ENCODE measurements at regions of chr5 and their contacts with region 1.

Region 1: DNA sequence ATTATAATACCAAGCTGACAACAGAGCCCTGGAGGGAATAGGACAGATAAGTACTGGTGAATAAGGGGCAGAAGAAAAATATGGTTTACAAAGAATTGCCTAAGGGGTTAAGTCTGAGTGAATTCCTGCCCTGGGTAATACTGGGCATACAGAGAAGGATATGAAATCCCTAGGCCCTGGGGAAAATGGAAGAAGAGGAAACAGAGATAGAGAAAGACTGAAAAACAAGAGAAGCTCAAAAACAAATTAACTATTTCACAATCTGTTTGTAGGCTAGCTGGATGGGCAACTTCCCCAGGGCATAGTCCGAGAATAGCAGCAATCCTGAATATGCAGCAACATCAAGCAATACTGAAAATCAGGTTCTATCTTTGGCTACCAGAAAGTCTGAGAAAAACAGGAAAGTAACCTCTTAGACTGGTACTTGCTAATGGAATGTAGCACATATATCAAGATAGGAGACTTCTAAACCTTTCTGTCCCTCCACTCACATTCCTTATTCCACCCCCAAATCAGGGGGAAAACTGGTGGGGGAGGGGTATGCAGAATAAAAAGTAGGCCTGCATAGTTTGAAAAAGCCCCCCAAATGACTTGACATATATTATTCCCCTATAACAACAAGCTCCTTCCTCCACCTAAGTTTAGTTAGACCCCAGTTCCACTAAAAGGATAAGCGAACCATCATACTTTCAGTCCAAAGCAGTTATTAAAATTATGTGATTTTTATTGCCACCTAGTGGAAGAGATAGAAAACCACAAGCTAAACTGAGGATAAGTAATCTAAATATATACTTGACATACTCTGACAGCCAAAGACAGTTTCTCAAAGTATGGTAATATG is 20.6 kb downstream of the SLC38A9 start:
- DNase-seq: no peak
- H3K4me3 Mint-ChIP-seq: no peak overlapping the region
- H3K27ac Mint-ChIP-seq: peak overlapping the region; percentile 69
- H3K4me1 Mint-ChIP-seq: peaks cover 18% of the 10 kb centered on the region
- H3K27me3 Mint-ChIP-seq: no peaks in the 10 kb centered on the region

Region 2: GRCh38 chr5:55172051-55172899 is 519.2 kb before region 1 on chr5:
- intact Hi-C with region 1: loop called (anchors 5 kb)
- DNase-seq: peak; percentile 60
- H3K4me3 Mint-ChIP-seq: peak overlapping the region; percentile 86
- H3K27ac Mint-ChIP-seq: peak overlapping the region; percentile 36
- H3K4me1 Mint-ChIP-seq: peaks cover 34% of the 10 kb centered on the region
- H3K27me3 Mint-ChIP-seq: peaks cover 66% of the 10 kb centered on the region

Region 3: DNA sequence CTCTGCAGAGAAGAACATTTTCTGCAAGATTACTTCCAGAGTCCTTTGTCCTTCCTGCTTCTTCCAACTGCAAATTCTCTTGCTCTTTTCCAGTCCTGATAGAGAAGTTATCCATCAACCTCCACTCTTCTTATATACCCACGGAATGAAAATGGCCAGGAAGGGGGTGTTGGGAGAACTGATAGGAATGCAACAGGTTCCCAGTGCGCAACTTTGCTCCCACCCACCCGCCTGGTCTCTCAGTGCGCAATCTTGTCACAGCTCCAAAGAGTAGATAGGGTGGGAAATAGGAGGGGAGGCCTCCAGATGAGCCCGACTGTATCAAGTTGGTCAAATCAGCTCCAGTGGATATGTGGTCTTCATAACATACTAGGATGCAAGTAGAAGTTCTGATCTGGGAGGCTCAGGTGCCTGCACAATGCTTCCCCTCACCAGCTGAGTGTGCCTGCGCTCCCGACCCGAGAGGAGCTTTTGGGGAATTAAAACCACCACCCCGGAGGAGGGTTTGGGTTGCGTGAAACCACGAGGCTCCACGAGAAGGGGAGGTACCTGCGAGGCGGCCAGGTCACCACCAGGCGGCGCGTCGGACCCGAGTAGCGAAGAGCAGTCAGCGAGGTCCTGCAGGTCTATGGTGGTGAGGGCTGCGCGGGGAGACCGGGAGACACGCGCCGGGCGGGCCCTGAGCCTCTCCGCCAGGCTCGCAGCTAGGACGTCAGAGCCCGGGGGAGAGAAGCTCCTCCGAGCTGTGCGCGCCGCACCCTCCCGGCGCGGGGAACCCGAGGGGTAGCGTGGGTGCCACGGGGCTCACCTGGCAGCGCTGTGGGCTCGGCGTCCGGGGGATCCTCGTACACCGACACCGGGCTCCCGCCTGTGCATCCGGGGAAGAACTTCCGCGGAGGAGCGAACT is 465.2 kb before region 1 on chr5:
- intact Hi-C with region 1: loop called (anchors 5 kb)
- DNase-seq: peak; percentile 50
- H3K4me3 Mint-ChIP-seq: peak overlapping the region; percentile 50
- H3K27ac Mint-ChIP-seq: no peak overlapping the region
- H3K4me1 Mint-ChIP-seq: peaks cover 29% of the 10 kb centered on the region
- H3K27me3 Mint-ChIP-seq: peaks cover 83% of the 10 kb centered on the region

Region 4: DNA sequence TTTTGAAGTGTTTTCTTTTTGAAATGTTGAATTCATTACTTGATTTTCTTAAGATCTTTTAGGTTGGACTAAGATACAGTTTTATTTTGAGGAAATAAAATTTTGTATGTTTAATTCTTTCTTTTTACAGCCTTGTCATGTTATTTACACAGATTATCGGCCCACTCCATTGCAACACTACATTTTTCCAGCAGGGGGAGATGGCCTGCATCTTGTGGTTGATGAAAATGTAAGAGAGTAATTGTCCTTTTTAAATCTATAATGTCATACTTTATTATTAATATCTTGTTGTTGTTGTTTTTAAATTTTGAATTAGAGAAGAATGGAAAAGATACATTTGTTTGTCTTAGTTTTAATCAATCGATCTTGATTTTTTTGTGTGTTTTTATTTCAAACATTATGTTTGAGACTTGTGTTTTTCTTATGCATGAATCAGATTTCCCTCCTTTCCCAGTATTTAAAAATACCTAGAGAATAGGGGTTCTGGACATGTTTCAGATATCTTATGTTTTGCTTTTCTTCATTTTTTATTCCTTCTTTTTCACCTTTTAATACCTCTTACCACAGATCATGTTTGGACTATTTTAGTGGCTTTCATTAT is 347.0 kb before region 1 on chr5:
- intact Hi-C with region 1: loop called (anchors 1 kb)
- DNase-seq: peak; percentile 37
- H3K4me3 Mint-ChIP-seq: no peak overlapping the region
- H3K27ac Mint-ChIP-seq: peak overlapping the region; percentile 58
- H3K4me1 Mint-ChIP-seq: peaks cover 4% of the 10 kb centered on the region
- H3K27me3 Mint-ChIP-seq: no peaks in the 10 kb centered on the region

Region 5: GRCh38 chr5:55407059-55407684 is 284.3 kb before region 1 on chr5:
- intact Hi-C with region 1: loop called (anchors 1 kb)
- DNase-seq: no peak
- H3K4me3 Mint-ChIP-seq: no peak overlapping the region
- H3K27ac Mint-ChIP-seq: no peak overlapping the region
- H3K4me1 Mint-ChIP-seq: peaks cover 15% of the 10 kb centered on the region
- H3K27me3 Mint-ChIP-seq: no peaks in the 10 kb centered on the region

Region 6: DNA sequence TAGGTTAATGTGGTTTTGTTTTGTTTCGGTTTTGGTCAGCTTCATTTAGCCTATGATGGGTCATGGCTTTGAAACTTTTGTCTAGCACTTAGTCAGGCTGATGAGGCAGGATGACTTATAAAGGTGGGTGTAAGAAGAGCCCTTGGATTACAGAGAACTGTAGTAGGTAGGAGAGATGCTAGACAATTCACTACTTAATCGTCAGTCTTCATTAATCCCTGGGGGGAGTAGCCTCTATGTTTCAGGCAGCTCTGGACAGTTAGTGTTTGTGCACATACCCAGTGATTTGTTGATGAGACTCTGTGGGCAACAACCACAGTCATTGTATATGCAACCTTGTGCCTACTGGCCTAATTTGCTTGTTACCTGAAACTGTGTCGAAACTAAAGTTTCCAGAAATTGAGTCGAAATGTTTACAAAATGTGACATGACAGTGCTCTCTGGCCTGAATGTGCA is 270.4 kb before region 1 on chr5:
- intact Hi-C with region 1: loop called (anchors 5 kb)
- DNase-seq: no peak
- H3K4me3 Mint-ChIP-seq: no peak overlapping the region
- H3K27ac Mint-ChIP-seq: peak overlapping the region; percentile 65
- H3K4me1 Mint-ChIP-seq: peaks cover 27% of the 10 kb centered on the region
- H3K27me3 Mint-ChIP-seq: no peaks in the 10 kb centered on the region

Region 7: GRCh38 chr5:55885359-55885758 is 193.9 kb after region 1 on chr5:
- intact Hi-C with region 1: no loop called
- DNase-seq: no peak
- H3K4me3 Mint-ChIP-seq: no peak overlapping the region
- H3K27ac Mint-ChIP-seq: no peak overlapping the region
- H3K4me1 Mint-ChIP-seq: peaks cover 5% of the 10 kb centered on the region
- H3K27me3 Mint-ChIP-seq: peaks cover 3% of the 10 kb centered on the region